OCI-LY7 (cell line): ENCODE measurements at regions of chrX and their contacts with region 1.

Region 1: DNA sequence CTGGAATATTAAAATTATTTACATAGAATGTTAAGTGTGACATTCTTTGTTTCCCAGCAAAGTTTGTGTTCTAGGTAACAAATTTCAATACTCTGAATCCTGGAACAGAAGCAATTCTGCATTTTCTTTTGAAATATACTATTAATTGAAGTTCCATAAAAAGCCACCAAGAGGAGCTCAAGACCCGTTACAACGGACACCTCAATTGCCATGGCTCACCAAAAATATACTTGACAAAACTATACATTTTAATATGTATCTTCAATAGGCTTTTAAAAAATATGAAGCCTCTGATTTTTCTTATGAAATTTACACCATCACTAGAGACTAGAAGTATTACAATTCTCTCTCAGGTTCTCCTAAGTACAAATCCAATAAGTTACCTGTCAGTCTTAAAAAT is 111.4 kb downstream of the NYX start:
- DNase-seq: peak; percentile 41
- H3K4me3 ChIP-seq: no peak overlapping the region
- H3K27ac ChIP-seq: no peak overlapping the region
- H3K4me1 ChIP-seq: peaks cover 20% of the 10 kb centered on the region
- CTCF ChIP-seq: peak; percentile 80

Region 2: GRCh38 chrX:41275661-41276609 is 282.6 kb before region 1 on chrX:
- CTCF ChIA-PET with region 1: no interaction called
- POLR2A ChIA-PET with region 1: interaction called, 4 read pairs
- intact Hi-C with region 1: loop called (anchors 10 kb)
- DNase-seq: peak; percentile 66
- H3K4me3 ChIP-seq: peak overlapping the region; percentile 68
- H3K27ac ChIP-seq: peak overlapping the region; percentile 77
- H3K4me1 ChIP-seq: peaks cover 20% of the 10 kb centered on the region
- CTCF ChIP-seq: peak; percentile 68

Region 3: DNA sequence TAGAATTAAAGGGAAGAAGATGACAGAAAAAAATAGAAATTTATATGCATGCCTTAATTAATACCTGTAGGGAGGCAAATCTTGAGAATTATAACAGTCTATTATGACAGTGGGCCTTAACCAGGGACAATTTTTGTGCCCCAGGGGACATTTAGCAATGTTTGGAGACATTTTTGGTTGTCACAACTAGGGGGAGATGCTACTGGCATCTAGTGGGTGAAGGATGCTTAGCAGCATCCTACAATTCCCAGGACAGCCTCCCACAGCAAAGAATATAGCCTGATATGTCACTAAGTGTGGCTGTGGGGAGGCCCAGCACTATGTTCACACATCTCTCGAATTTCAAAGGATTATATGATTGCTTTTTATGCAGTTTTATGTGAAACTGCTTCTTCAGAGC is 176.0 kb after region 1 on chrX:
- CTCF ChIA-PET with region 1: no interaction called
- POLR2A ChIA-PET with region 1: no interaction called
- intact Hi-C with region 1: loop called (anchors 1 kb)
- DNase-seq: peak; percentile 56
- H3K4me3 ChIP-seq: peak overlapping the region; percentile 56
- H3K27ac ChIP-seq: peak overlapping the region; percentile 99
- H3K4me1 ChIP-seq: peaks cover 68% of the 10 kb centered on the region
- CTCF ChIP-seq: peak; percentile 75

Region 4: GRCh38 chrX:41759817-41760216 is 201.3 kb after region 1 on chrX:
- CTCF ChIA-PET with region 1: no interaction called
- POLR2A ChIA-PET with region 1: no interaction called
- intact Hi-C with region 1: loop called (anchors 1 kb)
- DNase-seq: peak; percentile 51
- H3K4me3 ChIP-seq: no peak overlapping the region
- H3K27ac ChIP-seq: no peak overlapping the region
- H3K4me1 ChIP-seq: no peaks in the 10 kb centered on the region
- CTCF ChIP-seq: peak; percentile 81

Region 5: DNA sequence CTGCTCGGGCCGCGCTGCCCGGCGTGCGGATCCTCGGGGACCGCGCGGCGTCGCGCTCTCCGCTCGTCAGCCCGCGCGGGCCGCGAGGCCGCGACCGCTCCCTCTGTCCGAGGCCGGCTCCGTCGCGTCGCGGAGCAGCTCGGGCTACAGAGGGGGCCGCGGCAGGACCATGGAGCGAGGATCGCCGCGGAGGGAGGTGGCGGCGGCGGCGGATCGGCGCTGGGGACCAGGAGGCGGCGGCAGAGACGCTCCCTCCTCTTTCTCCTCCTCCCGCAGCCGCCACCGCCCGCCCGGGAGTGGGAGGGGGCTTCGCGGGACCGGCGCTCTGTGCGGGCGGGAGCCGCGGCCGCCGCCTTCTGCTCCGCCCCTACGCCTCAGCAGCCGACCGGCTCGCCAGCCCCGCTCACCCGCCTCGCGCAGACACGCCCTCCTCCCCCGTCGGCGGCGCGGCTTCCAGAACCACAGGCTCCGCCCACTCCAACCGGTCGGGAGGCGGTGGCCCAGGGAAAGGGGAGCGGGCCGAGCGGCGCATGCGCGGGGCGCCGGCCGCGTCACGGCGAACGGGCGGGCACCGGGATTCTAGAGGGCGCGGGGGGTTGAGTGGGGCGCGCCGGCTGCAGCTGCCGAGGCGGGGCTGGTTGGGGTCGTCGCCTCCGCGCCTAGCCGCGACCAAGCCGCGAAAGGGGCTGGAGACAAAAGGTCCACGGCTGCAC is 364.9 kb after region 1 on chrX and contains the start of gene CASK:
- CTCF ChIA-PET with region 1: interaction called, 13 read pairs
- POLR2A ChIA-PET with region 1: no interaction called
- intact Hi-C with region 1: no loop called
- DNase-seq: peak; percentile 90
- H3K4me3 ChIP-seq: peak within 1 kb of the TSS; percentile 84
- H3K27ac ChIP-seq: peak within 1 kb of the TSS; percentile 57
- H3K4me1 ChIP-seq: peaks cover 19% of the 10 kb centered on the region
- CTCF ChIP-seq: no peak
- total RNA-seq, gene CASK: 18.6 and 27.9 TPM in 2 replicates

Region 6: GRCh38 chrX:42085836-42086235 is 527.3 kb after region 1 on chrX:
- CTCF ChIA-PET with region 1: no interaction called
- POLR2A ChIA-PET with region 1: no interaction called
- intact Hi-C with region 1: no loop called
- DNase-seq: no peak
- H3K4me3 ChIP-seq: no peak overlapping the region
- H3K27ac ChIP-seq: no peak overlapping the region
- H3K4me1 ChIP-seq: no peaks in the 10 kb centered on the region
- CTCF ChIP-seq: no peak